CD8-positive, alpha-beta T cell (primary cell): ENCODE measurements at regions of chr19 and their contacts with region 1.

Region 1: GRCh38 chr19:2084993-2085720 is 11.0 kb downstream of the MOB3A start:
- DNase-seq: peak; percentile 85 to 99 (median 94)
- ATAC-seq: peak; percentile 51
- H3K4me3 ChIP-seq: peak overlapping the region; percentile 73 to 82
- H3K4me3 Mint-ChIP-seq: peak overlapping the region; percentile 98
- H3K27ac ChIP-seq: peak overlapping the region; percentile 89 to 95
- H3K27ac Mint-ChIP-seq: peak overlapping the region; percentile 98
- H3K4me1 ChIP-seq: peaks cover 73% of the 10 kb centered on the region
- H3K4me1 Mint-ChIP-seq: peaks cover 76% of the 10 kb centered on the region
- H3K27me3 ChIP-seq: no peaks in the 10 kb centered on the region
- H3K27me3 Mint-ChIP-seq: no peaks in the 10 kb centered on the region
- CTCF ChIP-seq: no peak

Region 2: GRCh38 chr19:1884719-1885334 is 200.3 kb before region 1 on chr19:
- CTCF ChIA-PET with region 1: no interaction called
- POLR2A ChIA-PET with region 1: interaction called, 3 read pairs
- intact Hi-C with region 1: loop called in 1 of 2 experiments (anchors 5 kb)
- DNase-seq: peak in 3 of 9 experiments; percentile 41 to 51 (median 48)
- ATAC-seq: no peak
- H3K4me3 ChIP-seq: peak overlapping the region; percentile 77 to 100
- H3K4me3 Mint-ChIP-seq: peak overlapping the region; percentile 100
- H3K27ac ChIP-seq: peak overlapping the region; percentile 92
- H3K27ac Mint-ChIP-seq: peak overlapping the region; percentile 99
- H3K4me1 ChIP-seq: peaks cover 40% of the 10 kb centered on the region
- H3K4me1 Mint-ChIP-seq: peaks cover 38% of the 10 kb centered on the region
- H3K27me3 ChIP-seq: no peaks in the 10 kb centered on the region
- H3K27me3 Mint-ChIP-seq: no peaks in the 10 kb centered on the region
- CTCF ChIP-seq: no peak

Region 3: DNA sequence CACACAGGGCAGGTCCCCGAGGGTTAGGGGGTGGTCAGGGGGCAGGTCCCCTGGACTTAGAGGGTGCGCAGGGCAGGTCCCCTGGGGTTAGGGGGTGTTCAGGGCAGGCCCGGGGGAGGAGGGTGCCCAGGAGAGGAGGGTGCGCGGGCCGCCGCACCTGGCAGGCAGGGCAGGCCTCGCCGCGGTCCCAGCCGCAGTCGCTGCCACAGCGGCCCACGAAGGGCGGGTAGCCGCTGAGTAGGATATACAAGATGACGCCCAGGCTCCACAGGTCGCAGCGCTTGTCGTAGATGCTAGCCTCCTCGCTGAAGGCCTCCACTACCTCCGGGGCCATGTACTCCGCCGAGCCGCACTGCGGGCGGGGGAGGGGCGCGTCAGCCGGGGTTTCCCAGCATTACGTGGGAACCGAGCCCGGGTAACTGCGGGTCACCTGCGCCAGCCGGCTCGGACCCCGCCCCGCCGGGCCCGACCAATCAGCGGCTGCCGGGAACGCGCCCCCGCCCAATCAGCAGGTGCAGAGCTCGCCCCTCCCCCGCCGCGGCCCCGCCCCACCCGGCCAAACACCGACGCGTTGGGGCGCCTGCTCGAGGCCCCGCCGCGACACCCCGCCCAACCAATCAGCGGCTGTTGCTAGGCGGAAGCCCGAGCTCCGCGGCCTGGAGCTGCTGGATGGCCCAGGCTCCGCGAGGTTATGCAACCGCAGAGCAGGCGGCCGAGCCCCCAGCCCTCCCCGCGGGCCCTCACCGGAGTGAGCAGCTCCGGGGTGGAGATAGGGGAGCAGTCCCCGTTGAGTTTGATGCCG is 43.3 kb before region 1 on chr19:
- CTCF ChIA-PET with region 1: interaction called, 3 read pairs
- POLR2A ChIA-PET with region 1: interaction called, 6 read pairs
- intact Hi-C with region 1: loop called (anchors 1 to 2 kb)
- DNase-seq: peak; percentile 99 to 100 (median 100)
- ATAC-seq: peak; percentile 85
- H3K4me3 ChIP-seq: peak overlapping the region; percentile 28 to 62
- H3K4me3 Mint-ChIP-seq: peak overlapping the region; percentile 65
- H3K27ac ChIP-seq: peak overlapping the region; percentile 96 to 100
- H3K27ac Mint-ChIP-seq: peak overlapping the region; percentile 93
- H3K4me1 ChIP-seq: peaks cover 54% of the 10 kb centered on the region
- H3K4me1 Mint-ChIP-seq: peaks cover 28% of the 10 kb centered on the region
- H3K27me3 ChIP-seq: no peaks in the 10 kb centered on the region
- H3K27me3 Mint-ChIP-seq: no peaks in the 10 kb centered on the region
- CTCF ChIP-seq: no peak

Region 4: DNA sequence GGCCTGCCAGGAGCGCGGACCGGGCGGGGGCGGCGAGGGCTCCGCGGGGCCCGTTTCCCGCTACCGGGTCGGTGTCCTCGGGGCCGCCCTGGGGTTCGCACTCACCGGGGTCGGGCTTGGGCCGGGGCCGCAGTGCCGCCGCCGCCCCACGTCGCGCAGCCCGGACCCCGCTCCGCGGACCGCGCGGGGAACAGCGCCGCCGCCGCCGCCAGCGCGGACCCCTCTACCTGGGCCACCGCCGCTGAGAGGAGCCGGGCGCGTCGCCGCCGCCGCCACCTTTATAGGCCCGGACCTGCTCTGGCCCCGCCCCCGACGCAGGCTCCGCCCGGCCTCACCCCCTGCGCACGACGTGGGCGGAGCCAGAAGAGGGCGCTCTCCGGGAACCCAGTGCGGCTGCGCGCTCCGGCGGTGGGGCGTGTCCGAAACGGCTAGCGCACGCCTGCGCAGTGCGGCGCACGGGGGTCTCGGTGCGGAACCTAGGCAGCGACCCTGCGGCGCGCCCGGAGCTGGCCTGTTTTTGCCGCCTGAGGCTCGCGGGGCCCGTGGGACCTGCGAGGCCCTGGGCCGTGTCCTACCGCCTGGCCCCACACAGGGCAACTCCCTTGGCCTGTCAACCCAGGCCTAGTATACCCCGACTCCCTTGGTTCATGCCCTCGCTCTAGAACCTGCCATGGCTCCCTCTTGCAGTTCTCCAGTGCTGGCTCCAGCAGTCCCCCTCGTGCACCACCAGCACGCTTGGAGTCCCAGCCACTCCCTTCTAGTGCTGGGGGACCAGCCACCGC is 34.0 kb before region 1 on chr19 and contains the start of gene MKNK2:
- CTCF ChIA-PET with region 1: interaction called, 4 read pairs
- POLR2A ChIA-PET with region 1: interaction called, 16 read pairs
- intact Hi-C with region 1: loop called (anchors 2 kb)
- DNase-seq: peak; percentile 87 to 99 (median 94)
- ATAC-seq: peak; percentile 79
- H3K4me3 ChIP-seq: peak within 1 kb of the TSS; percentile 94 to 98
- H3K4me3 Mint-ChIP-seq: peak within 1 kb of the TSS; percentile 86
- H3K27ac ChIP-seq: peak within 1 kb of the TSS; percentile 78 to 94
- H3K27ac Mint-ChIP-seq: peak within 1 kb of the TSS; percentile 89
- H3K4me1 ChIP-seq: peaks cover 73% of the 10 kb centered on the region
- H3K4me1 Mint-ChIP-seq: peaks cover 46% of the 10 kb centered on the region
- H3K27me3 ChIP-seq: no peaks in the 10 kb centered on the region
- H3K27me3 Mint-ChIP-seq: no peaks in the 10 kb centered on the region
- CTCF ChIP-seq: peak; percentile 29
- total RNA-seq, gene MKNK2: 453 to 455 TPM

Region 5: DNA sequence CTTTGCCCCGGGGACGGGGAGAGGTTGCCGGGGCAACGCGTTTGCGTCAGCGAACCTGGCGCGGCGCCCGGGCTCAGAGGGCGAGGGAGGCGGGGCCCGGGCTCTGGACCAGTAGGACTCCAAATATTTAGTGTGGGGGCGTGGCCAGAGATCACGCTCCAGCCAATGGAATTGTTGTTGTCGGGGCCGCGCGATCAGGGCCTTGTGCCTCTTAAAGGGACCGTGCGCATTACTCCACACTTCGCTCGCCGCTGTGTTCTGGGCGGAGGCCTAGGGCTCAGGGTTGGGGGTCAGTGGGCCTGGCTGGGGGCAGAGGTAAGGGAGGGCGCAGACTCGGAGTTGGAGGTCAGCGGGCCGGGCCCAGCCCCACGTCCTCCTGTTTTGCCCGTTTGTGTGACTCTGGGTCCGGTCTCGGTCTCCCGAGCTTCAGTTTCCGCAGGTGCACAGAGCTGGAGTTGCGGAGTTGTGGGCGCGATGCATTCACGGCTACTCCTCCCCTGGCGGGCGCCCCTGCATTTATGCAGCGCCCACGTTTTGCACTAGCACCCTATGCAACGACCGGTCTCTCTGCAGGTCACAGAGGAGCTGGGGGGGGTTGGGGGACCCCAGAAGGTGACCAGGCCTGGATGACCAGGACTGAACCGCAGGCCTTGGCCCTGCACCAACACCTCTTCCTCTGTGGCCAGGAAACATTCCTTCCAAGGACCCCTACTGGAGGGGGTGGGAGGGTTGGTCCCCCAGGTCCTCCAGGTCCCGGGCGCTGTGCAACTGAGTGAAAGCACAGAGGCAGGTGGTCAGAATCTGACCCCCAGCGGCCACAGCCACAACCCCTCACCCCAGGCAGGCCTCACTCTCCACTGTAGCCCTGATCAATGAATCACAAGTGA is 23.4 kb before region 1 on chr19:
- CTCF ChIA-PET with region 1: interaction called, 5 read pairs
- POLR2A ChIA-PET with region 1: interaction called, 17 read pairs
- intact Hi-C with region 1: loop called (anchors 1 kb)
- DNase-seq: peak; percentile 99 to 100 (median 99)
- ATAC-seq: peak; percentile 94
- H3K4me3 ChIP-seq: peak overlapping the region; percentile 73 to 80
- H3K4me3 Mint-ChIP-seq: peak overlapping the region; percentile 91
- H3K27ac ChIP-seq: peak overlapping the region; percentile 91 to 96
- H3K27ac Mint-ChIP-seq: peak overlapping the region; percentile 95
- H3K4me1 ChIP-seq: peaks cover 52% of the 10 kb centered on the region
- H3K4me1 Mint-ChIP-seq: peaks cover 44% of the 10 kb centered on the region
- H3K27me3 ChIP-seq: no peaks in the 10 kb centered on the region
- H3K27me3 Mint-ChIP-seq: no peaks in the 10 kb centered on the region
- CTCF ChIP-seq: no peak

Region 6: GRCh38 chr19:2070436-2070827 is 14.7 kb before region 1 on chr19:
- CTCF ChIA-PET with region 1: interaction called, 49 read pairs
- POLR2A ChIA-PET with region 1: interaction called, 17 read pairs
- intact Hi-C with region 1: loop called in 1 of 2 experiments (anchors 1 kb)
- DNase-seq: no peak
- ATAC-seq: peak; percentile 7
- H3K4me3 ChIP-seq: no peak overlapping the region
- H3K4me3 Mint-ChIP-seq: no peak overlapping the region
- H3K27ac ChIP-seq: no peak overlapping the region
- H3K27ac Mint-ChIP-seq: peak overlapping the region; percentile 37
- H3K4me1 ChIP-seq: peaks cover 11% of the 10 kb centered on the region
- H3K4me1 Mint-ChIP-seq: peaks cover 24% of the 10 kb centered on the region
- H3K27me3 ChIP-seq: no peaks in the 10 kb centered on the region
- H3K27me3 Mint-ChIP-seq: no peaks in the 10 kb centered on the region
- CTCF ChIP-seq: no peak

Region 7: GRCh38 chr19:2135474-2136402 is 50.6 kb after region 1 on chr19:
- CTCF ChIA-PET with region 1: no interaction called
- POLR2A ChIA-PET with region 1: no interaction called
- intact Hi-C with region 1: no loop called
- DNase-seq: no peak
- ATAC-seq: no peak
- H3K4me3 ChIP-seq: no peak overlapping the region
- H3K4me3 Mint-ChIP-seq: no peak overlapping the region
- H3K27ac ChIP-seq: no peak overlapping the region
- H3K27ac Mint-ChIP-seq: no peak overlapping the region
- H3K4me1 ChIP-seq: no peaks in the 10 kb centered on the region
- H3K4me1 Mint-ChIP-seq: peaks cover 6% of the 10 kb centered on the region
- H3K27me3 ChIP-seq: no peaks in the 10 kb centered on the region
- H3K27me3 Mint-ChIP-seq: no peaks in the 10 kb centered on the region
- CTCF ChIP-seq: no peak